KBM-7 (cell line): ENCODE measurements at regions of chr16 and their contacts with region 1.

Region 1: GRCh38 chr16:80824718-80825364 is 20.4 kb upstream of the CDYL2 start:
- DNase-seq: peak; percentile 57

Region 2: DNA sequence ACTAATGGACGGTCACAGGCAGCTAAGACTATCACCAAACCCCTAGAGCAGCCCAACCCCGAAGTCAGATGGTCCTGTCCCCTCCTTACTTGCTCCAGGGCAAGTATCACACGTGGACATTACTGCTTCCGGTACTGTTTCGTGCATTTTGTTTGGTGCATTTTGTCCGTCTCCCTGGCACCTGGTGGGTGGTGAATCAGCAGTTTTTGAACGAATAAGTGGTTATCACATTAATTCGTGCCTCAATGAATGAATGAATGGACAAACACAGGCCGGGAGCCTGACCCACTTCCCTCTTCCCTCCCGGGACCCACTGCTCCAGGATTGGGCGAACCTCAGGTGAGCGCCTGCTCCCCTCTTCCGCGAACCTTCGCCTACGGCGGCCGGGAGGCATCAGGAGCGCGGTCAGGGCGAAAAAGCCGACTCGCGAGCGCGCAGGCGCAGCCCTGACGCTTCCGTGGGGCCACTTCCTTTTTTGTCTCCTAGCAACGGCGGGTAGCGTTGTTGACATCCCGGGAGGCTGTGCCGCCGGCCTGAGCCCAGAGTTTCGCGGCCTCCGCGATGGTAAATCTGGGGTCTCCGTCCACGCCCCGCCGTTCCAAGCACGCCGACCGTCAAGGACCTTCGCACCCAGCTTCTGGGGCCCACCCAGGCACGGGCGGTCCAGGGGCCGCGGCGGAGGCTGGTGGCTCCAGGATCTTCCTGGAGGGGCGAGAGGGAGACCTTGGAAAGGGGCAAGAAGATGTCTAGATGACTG is 284.1 kb before region 1 on chr16 and contains the start of gene DYNLRB2:
- in situ Hi-C with region 1: loop called (anchors 25 kb)
- DNase-seq: no peak